ENCODE measurements at regions of chr3 and their contacts with region 1.

Region 1: GRCh38 chr3:47152578-47152977 is 11.3 kb downstream of the SETD2 start:
- DNase-seq: no peak
- ATAC-seq: no peak
- H3K4me3 ChIP-seq: no peak overlapping the region
- H3K27ac ChIP-seq: no peak overlapping the region
- H3K4me1 ChIP-seq: no peaks in the 10 kb centered on the region; the same call in 1 of the 2 replicates
- H3K27me3 ChIP-seq: no peaks in the 10 kb centered on the region
- CTCF ChIP-seq: no peak

Region 2: GRCh38 chr3:47133641-47134040 is 18.9 kb before region 1 on chr3:
- CTCF ChIA-PET with region 1: interaction called, 11 read pairs
- POLR2A ChIA-PET with region 1: interaction called, 6 read pairs
- in situ Hi-C with region 1: no loop called
- intact Hi-C with region 1: no loop called
- DNase-seq: no peak
- ATAC-seq: no peak
- H3K4me3 ChIP-seq: no peak overlapping the region
- H3K27ac ChIP-seq: no peak overlapping the region
- H3K4me1 ChIP-seq: no peaks in the 10 kb centered on the region
- H3K27me3 ChIP-seq: no peaks in the 10 kb centered on the region
- CTCF ChIP-seq: no peak